Activated CD4-positive, alpha-beta memory T cell treated with anti-CD3 and anti-CD28 coated beads, Interleukin-2, amount 10 ng/mL, durations not matched to agents 7 days and 5 days (primary cell): ENCODE measurements at regions of chr9 and their contacts with region 1.

Region 1: DNA sequence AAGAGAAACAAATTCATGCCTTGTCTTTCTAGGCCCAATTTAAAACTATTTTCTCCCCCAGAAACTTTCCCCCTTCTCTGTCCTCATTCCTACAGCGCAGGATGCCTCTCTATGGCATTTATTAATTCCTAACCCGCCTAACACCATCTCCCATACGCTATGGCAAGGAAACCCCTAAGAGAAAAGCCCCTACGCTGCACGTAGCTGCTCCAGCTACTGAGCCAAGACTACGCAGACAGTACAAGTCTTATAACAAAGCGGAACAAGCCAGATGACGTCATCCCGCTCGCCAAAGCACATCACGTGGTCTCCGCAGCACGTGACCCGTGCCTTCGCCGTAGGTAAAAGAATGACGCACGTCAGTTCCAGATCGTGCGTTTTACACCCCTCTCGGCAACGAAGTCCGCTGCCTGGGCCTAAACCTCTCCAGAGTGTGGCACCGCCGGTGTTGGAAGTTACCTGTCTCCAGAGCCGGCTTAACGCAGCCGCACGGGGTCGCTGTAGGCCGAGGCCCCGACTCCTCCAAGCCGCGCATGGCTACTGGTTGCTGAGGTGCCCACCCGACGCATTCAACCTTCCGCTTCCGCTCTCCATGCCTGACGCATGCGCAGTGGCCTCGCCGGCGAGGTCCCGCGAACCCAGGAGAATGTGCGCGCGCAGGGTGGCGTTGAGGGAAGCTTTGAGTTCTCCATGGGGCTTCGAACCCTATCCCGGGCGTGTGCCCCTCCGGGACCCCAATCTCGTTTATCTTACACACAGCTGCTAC is at the start of gene TRMO:
- DNase-seq: peak; percentile 98
- H3K4me3 Mint-ChIP-seq: peak within 1 kb of the TSS; percentile 93
- H3K27ac Mint-ChIP-seq: peak within 1 kb of the TSS; percentile 98
- H3K4me1 Mint-ChIP-seq: peaks cover 51% of the 10 kb centered on the region
- H3K27me3 Mint-ChIP-seq: peaks cover 4% of the 10 kb centered on the region
- total RNA-seq, gene TRMO: 25.4 to 27.4 TPM

Region 2: GRCh38 chr9:97632985-97633858 is 288.9 kb before region 1 on chr9 and contains the starts of genes NCBP1 and TSTD2:
- CTCF ChIA-PET with region 1: no interaction called
- POLR2A ChIA-PET with region 1: interaction called, 34 read pairs
- DNase-seq: peak; percentile 97
- H3K4me3 Mint-ChIP-seq: peak within 1 kb of the TSS; percentile 86
- H3K27ac Mint-ChIP-seq: peak within 1 kb of the TSS; percentile 97
- H3K4me1 Mint-ChIP-seq: peaks cover 49% of the 10 kb centered on the region
- H3K27me3 Mint-ChIP-seq: no peaks in the 10 kb centered on the region
- total RNA-seq, gene NCBP1: 34.5 to 36.5 TPM
- total RNA-seq, gene TSTD2: 10.5 to 12.2 TPM

Region 3: GRCh38 chr9:97873877-97874276 is 48.3 kb before region 1 on chr9:
- CTCF ChIA-PET with region 1: no interaction called
- POLR2A ChIA-PET with region 1: no interaction called
- DNase-seq: no peak
- H3K4me3 Mint-ChIP-seq: no peak overlapping the region
- H3K27ac Mint-ChIP-seq: no peak overlapping the region
- H3K4me1 Mint-ChIP-seq: no peaks in the 10 kb centered on the region
- H3K27me3 Mint-ChIP-seq: peaks cover 13% of the 10 kb centered on the region

Region 4: DNA sequence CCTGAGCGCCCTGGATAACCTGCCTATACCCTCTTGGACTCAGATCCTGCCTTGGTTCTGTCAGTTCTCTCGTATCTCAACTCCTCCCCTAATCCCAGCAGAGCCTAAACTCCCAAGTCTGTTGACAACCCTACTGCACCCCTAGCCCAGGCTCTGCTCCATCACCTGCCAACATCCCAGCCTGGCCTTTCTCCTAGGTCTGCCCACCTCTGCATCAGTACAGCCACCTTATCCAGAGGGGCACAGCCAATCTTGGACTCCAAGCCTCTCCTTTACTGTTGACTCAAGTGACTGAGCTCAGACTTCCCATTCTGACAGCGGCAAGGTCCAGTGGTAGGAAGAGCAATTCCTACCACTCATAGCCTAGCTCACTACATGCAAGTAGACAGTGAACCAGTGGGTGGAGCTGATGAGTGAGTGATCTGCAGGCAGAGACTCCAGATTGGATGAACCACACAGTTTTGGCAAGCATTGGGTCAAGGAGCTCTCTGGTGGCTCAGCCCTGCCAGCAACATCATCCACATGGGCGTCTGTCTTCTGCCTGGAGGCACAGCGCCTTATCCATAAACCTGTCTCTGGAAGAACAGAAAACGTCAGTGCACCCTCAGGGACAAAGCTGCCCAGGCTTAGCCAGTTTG is 26.3 kb before region 1 on chr9:
- CTCF ChIA-PET with region 1: interaction called, 175 read pairs
- POLR2A ChIA-PET with region 1: interaction called, 360 read pairs
- DNase-seq: no peak
- H3K4me3 Mint-ChIP-seq: no peak overlapping the region
- H3K27ac Mint-ChIP-seq: no peak overlapping the region
- H3K4me1 Mint-ChIP-seq: peaks cover 2% of the 10 kb centered on the region
- H3K27me3 Mint-ChIP-seq: no peaks in the 10 kb centered on the region

Region 5: GRCh38 chr9:97938081-97938644 is 16.0 kb after region 1 on chr9 and contains the start of gene HEMGN:
- CTCF ChIA-PET with region 1: interaction called, 15 read pairs
- POLR2A ChIA-PET with region 1: interaction called, 14 read pairs
- DNase-seq: peak; percentile 49
- H3K4me3 Mint-ChIP-seq: no peak within 1 kb of the TSS
- H3K27ac Mint-ChIP-seq: peak within 1 kb of the TSS; percentile 47
- H3K4me1 Mint-ChIP-seq: peaks cover 17% of the 10 kb centered on the region
- H3K27me3 Mint-ChIP-seq: peaks cover 6% of the 10 kb centered on the region
- total RNA-seq, gene HEMGN: 0.53 to 0.83 TPM

Region 6: GRCh38 chr9:97990266-97990665 is 68.1 kb after region 1 on chr9:
- CTCF ChIA-PET with region 1: interaction called, 88 read pairs
- POLR2A ChIA-PET with region 1: interaction called, 180 read pairs
- DNase-seq: no peak
- H3K4me3 Mint-ChIP-seq: no peak overlapping the region
- H3K27ac Mint-ChIP-seq: peak overlapping the region; percentile 36
- H3K4me1 Mint-ChIP-seq: peaks cover 93% of the 10 kb centered on the region
- H3K27me3 Mint-ChIP-seq: no peaks in the 10 kb centered on the region

Region 7: GRCh38 chr9:98056269-98057137 is 134.4 kb after region 1 on chr9 and contains the start of gene NANS:
- CTCF ChIA-PET with region 1: interaction called, 37 read pairs
- POLR2A ChIA-PET with region 1: interaction called, 45 read pairs
- DNase-seq: peak; percentile 94
- H3K4me3 Mint-ChIP-seq: peak within 1 kb of the TSS; percentile 97
- H3K27ac Mint-ChIP-seq: peak within 1 kb of the TSS; percentile 92
- H3K4me1 Mint-ChIP-seq: peaks cover 37% of the 10 kb centered on the region
- H3K27me3 Mint-ChIP-seq: no peaks in the 10 kb centered on the region
- total RNA-seq, gene NANS: 46.1 to 47.3 TPM